AG04449 (cell line): ENCODE measurements at regions of chr12 and their contacts with region 1.

Region 1: DNA sequence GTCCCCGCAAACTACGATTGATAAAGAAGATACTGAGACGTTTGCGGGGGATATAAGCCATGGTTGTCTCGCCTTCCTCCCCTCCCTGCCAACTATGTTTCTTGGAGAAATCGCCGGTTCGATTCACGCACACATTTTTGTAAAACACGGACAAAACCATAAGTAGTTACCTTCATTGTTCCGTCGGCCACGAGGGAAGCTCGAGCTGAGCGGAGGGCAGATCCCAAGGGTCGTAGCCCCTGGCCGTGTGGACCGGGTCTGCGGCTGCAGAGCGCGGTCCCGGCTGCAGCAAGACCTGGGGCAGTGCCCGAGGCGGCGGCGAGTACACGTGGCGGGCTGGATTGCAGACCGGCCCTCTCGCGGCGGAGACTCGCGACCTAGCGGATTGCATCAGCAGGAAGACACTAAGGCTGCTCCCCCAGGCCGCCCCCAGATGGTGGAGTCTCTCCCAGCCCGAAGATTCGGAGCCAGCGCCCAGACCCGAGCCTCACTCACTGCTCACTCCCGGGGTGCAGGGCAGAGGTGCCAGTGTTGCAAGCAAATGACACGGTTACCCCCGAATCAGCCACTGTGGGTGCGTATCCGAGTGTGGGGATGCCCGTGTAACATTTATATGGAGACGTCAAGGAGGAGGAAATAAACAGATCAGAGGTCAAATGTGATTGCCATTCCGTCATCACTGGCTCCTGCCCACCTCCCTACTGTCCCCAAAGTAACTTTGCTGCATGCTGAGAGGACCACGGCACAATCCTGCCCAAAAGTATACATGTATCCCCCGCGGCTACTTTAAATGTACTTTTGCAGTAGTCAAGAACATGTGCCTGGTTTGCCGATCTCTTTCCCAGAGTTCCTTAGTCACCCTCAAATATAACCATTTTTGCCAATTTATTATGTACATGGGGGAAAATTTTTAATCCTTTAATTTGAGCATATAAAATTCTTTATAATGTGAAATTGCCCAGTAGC is at the start of gene BCAT1:
- DNase-seq: peak; percentile 49
- H3K4me3 ChIP-seq: peak within 1 kb of the TSS; percentile 68
- CTCF ChIP-seq: peak; percentile 39

Region 2: GRCh38 chr12:24922090-24922489 is 26.9 kb before region 1 on chr12:
- CTCF ChIA-PET with region 1: no interaction called
- POLR2A ChIA-PET with region 1: no interaction called
- DNase-seq: no peak
- H3K4me3 ChIP-seq: no peak overlapping the region
- CTCF ChIP-seq: no peak

Region 3: GRCh38 chr12:24937553-24938244 is 11.3 kb before region 1 on chr12:
- CTCF ChIA-PET with region 1: interaction called, 3 read pairs
- POLR2A ChIA-PET with region 1: interaction called, 14 read pairs
- DNase-seq: no peak
- H3K4me3 ChIP-seq: no peak overlapping the region
- CTCF ChIP-seq: no peak

Region 4: DNA sequence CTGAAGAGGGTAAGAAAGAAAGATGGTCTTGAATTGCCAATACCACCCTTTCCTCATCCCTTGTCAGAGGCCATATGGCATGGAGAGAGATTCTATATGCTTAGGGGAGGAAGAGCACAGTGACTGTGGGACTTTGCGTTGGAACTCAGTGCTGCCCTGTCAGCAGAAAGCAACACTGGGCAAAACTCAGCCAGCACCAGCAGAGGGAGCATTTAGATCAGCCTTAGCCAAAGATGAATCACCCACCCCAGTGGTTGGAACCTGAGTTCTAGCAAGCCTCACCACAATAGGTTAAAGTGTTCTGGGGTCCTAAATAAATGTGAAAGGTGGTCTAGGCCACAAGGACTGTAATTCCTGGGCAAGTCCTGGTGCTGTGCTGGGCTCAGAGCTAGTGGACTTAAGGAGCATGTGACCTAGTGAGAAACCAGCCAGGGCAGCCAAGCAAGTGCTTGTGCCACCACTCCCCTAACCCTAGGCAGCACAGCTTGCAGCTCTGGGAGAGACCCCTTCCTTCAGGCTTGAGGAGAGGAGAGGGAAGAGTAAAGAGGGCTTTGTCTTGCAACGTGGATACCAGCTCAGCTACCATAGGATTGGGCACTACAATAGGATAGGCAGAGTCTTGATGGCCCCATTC is 11.3 kb after region 1 on chr12:
- CTCF ChIA-PET with region 1: interaction called, 12 read pairs
- POLR2A ChIA-PET with region 1: no interaction called
- DNase-seq: no peak
- H3K4me3 ChIP-seq: no peak overlapping the region
- CTCF ChIP-seq: peak; percentile 87